CD4-positive, alpha-beta T cell (primary cell): ENCODE measurements at regions of chr1 and their contacts with region 1.

Region 1: GRCh38 chr1:15323351-15323988 is 76.4 kb downstream of the FHAD1 start:
- DNase-seq: peak; percentile 59 to 88 (median 66)
- ATAC-seq: peak; percentile 89
- H3K4me3 ChIP-seq: no peak overlapping the region
- H3K4me3 Mint-ChIP-seq: no peak overlapping the region
- H3K27ac ChIP-seq: no peak overlapping the region
- H3K27ac Mint-ChIP-seq: no peak overlapping the region
- H3K4me1 ChIP-seq: peaks cover 6% of the 10 kb centered on the region
- H3K4me1 Mint-ChIP-seq: no peaks in the 10 kb centered on the region
- H3K27me3 ChIP-seq: peaks cover 1 to 4% of the 10 kb centered on the region in 2 experiments
- H3K27me3 Mint-ChIP-seq: peaks cover 11% of the 10 kb centered on the region
- CTCF ChIP-seq: peak; percentile 96

Region 2: DNA sequence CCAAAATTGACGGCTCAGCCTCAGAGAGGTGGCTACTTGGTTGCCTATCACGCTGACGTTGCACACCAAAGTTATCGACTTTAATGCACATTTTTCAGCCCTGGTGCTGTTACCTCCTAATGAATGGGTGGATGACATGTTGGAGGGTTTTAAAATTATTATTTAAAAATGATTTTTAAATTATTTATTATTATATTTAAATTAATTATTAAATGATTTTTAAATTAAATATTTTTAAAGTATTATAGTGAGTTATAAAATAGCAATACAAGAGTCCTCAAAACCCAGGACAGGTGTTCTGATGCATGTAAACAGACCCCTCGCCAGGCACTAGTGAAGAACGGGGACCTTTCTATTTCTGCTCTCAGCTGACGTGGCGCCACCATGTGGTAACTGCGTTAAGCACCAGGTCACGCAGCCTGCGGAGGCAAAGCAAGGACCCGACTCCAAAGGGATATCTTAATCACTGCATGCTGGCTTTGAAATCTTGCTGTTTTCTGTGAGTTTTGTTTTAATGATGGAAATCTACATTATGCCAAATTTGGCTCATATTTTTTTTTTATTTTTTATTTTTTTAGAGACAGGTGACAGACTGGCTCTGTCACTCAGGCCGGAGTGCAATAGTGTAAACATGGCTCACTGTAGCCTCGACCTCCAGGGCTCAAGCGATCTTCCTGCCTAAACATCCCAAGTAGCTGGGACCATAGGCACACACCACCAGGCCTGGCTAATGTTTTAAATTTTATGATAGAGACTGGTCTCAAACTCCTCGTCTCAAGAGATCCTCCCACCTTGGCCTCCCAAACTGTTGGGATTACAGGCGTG is 177.9 kb after region 1 on chr1:
- CTCF ChIA-PET with region 1: no interaction called
- POLR2A ChIA-PET with region 1: no interaction called
- intact Hi-C with region 1: loop called in 1 of 2 experiments (anchors 5 kb)
- DNase-seq: peak in 13 of 14 experiments; percentile 12 to 66 (median 41)
- ATAC-seq: peak; percentile 61
- H3K4me3 ChIP-seq: no peak overlapping the region
- H3K4me3 Mint-ChIP-seq: no peak overlapping the region
- H3K27ac ChIP-seq: no peak overlapping the region
- H3K27ac Mint-ChIP-seq: no peak overlapping the region
- H3K4me1 ChIP-seq: no peaks in the 10 kb centered on the region
- H3K4me1 Mint-ChIP-seq: no peaks in the 10 kb centered on the region
- H3K27me3 ChIP-seq: no peaks in the 10 kb centered on the region
- H3K27me3 Mint-ChIP-seq: no peaks in the 10 kb centered on the region
- CTCF ChIP-seq: peak; percentile 52